GM12878 (cell line): ENCODE measurements at regions of chr2 and their contacts with region 1.

Region 1: DNA sequence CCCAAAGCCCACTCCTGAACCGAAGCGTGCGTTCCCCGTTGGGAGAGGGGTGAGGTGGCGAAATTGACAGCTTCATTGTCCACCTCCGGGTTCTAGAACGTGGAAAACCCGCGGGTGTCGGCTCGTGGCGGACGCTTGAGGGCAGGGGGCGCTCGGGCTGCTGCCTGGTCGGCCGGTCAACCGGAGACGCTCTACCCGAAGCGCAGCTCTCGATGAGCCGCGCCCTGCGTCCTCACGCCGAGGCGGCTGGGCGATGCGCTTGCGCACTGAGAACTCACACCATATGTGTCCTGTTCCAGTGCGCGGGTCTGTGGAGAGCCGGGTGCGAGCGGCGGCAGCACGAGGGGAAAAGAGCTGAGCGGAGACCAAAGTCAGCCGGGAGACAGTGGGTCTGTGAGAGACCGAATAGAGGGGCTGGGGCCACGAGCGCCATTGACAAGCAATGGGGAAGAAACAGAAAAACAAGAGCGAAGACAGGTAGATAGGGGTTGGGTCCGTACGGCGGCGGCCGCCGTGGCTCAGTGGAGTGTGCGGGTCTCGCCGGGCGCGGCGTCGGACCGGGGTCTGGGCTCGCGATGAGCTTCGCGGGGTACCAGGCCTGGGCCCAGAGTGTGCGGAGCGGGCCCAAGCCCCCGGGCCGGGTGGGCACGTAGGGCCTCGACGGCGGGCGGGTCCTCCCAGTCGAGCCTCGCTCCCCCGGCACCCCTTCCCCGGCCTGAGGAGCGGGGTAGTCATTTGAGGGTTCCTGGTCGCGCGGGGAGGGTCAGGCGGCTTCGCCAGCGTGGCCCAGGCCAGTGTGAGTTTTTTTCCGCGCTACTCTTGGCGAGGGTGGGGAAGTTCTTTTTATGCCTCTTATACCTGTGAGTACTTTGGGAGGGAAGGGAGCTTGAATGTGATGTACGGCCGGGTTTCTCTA is at the start of gene EIF5B:
- DNase-seq: peak; percentile 90
- ATAC-seq: peak; percentile 87
- H3K4me3 ChIP-seq: peak within 1 kb of the TSS; percentile 89
- H3K27ac ChIP-seq: peak within 1 kb of the TSS; percentile 98
- H3K4me1 ChIP-seq: peaks cover 5% of the 10 kb centered on the region
- H3K27me3 ChIP-seq: no peaks in the 10 kb centered on the region
- CTCF ChIP-seq: peak; percentile 75 to 86 (median 79)
- EP300 ChIP-seq: peak; percentile 5 to 19; a peak in 1 of 4 replicates
- POLR2A ChIP-seq: peak; percentile 95
- RAD21 ChIP-seq: peak; percentile 10; the same call in 1 of the 2 replicates
- polyA plus RNA-seq, gene EIF5B: 38.2 to 52.4 TPM

Region 2: DNA sequence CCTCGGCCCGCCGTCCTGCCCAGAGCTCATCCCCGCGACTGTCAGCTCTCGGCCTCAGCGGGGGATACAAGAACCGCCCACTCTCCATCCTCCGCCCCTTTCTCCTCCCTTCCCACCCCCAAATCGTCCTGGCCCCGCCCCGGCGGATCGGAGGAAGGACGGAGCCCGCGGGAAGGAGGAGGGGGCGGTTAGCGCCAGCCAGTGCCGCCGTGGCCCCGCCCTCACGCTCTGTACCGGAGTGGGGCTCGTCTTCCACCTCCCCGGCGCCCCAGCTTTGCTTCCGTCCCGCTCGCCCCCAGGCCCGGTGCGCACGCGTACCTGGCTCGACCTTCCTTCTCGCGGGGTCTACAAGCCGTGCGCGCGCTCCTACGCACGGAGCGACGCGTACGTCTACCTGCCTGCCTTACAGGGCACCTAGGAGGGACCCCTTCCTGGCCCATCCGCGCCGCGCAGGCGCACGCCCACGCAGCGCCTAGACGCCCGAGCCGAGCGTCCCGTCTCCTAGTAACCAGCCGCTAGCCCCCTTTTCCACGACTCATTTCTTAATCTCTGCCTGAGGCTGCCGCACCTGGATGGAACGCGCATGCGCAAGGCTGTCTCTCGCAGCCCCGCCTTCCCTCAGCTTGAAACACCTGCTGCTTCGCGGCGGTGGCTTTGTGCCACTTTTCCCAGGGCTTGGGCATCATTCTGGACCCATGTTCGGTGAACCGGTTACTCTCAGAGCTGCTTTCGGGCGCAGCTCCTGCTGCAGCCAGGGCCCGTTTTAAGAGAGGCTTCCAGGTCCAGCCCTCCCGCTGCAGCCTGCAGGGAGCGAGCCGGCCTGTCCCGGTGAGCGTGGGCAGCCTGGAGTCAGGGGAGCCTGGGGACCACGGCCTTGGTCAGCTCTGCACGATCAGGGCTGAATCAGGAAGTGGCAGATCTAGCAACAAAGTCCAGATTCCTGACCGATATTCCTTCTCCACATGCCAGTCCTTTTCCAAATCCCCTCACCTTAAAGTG is 196.0 kb before region 1 on chr2 and contains the start of gene C2orf15:
- CTCF ChIA-PET with region 1: interaction called, 10 read pairs
- POLR2A ChIA-PET with region 1: interaction called, 7 read pairs
- RAD21 ChIA-PET with region 1: interaction called, 6 read pairs
- SMC1A ChIA-PET with region 1: no interaction called
- in situ Hi-C with region 1: no loop called
- intact Hi-C with region 1: no loop called
- DNase-seq: peak; percentile 80
- ATAC-seq: peak; percentile 94
- H3K4me3 ChIP-seq: peak within 1 kb of the TSS; percentile 77
- H3K27ac ChIP-seq: peak within 1 kb of the TSS; percentile 55
- H3K4me1 ChIP-seq: peaks cover 10% of the 10 kb centered on the region
- H3K27me3 ChIP-seq: no peaks in the 10 kb centered on the region
- CTCF ChIP-seq: no peak
- EP300 ChIP-seq: no peak
- POLR2A ChIP-seq: peak; percentile 89
- RAD21 ChIP-seq: no peak
- polyA plus RNA-seq, gene C2orf15: 1.7 to 2.3 TPM

Region 3: GRCh38 chr2:99180755-99181623 is 156.4 kb before region 1 on chr2 and contains the starts of genes MITD1 and MRPL30:
- CTCF ChIA-PET with region 1: interaction called, 6 read pairs
- POLR2A ChIA-PET with region 1: interaction called, 9 read pairs
- RAD21 ChIA-PET with region 1: no interaction called
- SMC1A ChIA-PET with region 1: interaction called, 10 read pairs
- in situ Hi-C with region 1: no loop called
- intact Hi-C with region 1: loop called (anchors 1 kb)
- DNase-seq: peak; percentile 95
- ATAC-seq: peak; percentile 92
- H3K4me3 ChIP-seq: peak within 1 kb of the TSS; percentile 95
- H3K27ac ChIP-seq: peak within 1 kb of the TSS; percentile 83
- H3K4me1 ChIP-seq: no peaks in the 10 kb centered on the region; the same call in 1 of the 2 replicates
- H3K27me3 ChIP-seq: no peaks in the 10 kb centered on the region
- CTCF ChIP-seq: no peak
- EP300 ChIP-seq: no peak
- POLR2A ChIP-seq: peak; percentile 93
- RAD21 ChIP-seq: no peak
- polyA plus RNA-seq, gene MITD1: 106 to 116 TPM
- polyA plus RNA-seq, gene MRPL30: 34.9 to 53.1 TPM

Region 4: GRCh38 chr2:99356853-99357252 is 19.5 kb after region 1 on chr2:
- CTCF ChIA-PET with region 1: interaction called, 15 read pairs
- POLR2A ChIA-PET with region 1: interaction called, 4 read pairs
- RAD21 ChIA-PET with region 1: interaction called, 8 read pairs
- SMC1A ChIA-PET with region 1: interaction called, 17 read pairs
- in situ Hi-C with region 1: no loop called
- intact Hi-C with region 1: no loop called
- DNase-seq: no peak
- ATAC-seq: peak; percentile 79
- H3K4me3 ChIP-seq: no peak overlapping the region
- H3K27ac ChIP-seq: no peak overlapping the region
- H3K4me1 ChIP-seq: no peaks in the 10 kb centered on the region
- H3K27me3 ChIP-seq: no peaks in the 10 kb centered on the region
- CTCF ChIP-seq: no peak
- EP300 ChIP-seq: no peak
- POLR2A ChIP-seq: no peak
- RAD21 ChIP-seq: no peak